HEK293T (cell line): ENCODE measurements at regions of chr2 and their contacts with region 1.

Region 1: GRCh38 chr2:215442404-215442794 is 6.5 kb upstream of the FN1 start:
- DNase-seq: no peak

Region 2: DNA sequence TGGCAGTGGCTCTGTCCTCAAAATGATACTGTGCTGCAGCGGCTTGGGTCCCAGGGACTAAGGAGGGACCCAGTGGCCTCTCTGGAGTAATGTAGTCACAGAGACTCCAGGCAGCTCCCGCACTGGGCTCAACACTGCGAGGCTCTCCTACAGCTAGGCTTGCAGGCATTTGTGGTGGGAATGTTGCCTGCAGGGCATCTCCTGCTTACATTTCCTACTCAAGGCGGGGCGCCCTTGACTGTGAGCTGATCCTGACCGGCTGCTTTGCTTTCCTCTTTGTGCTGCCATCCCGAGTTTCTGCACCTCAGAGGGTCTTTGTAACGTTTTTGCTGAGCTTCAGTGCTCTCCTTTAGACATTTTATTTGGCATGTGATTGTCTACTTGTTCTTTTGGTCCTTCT is 170.9 kb after region 1 on chr2:
- CTCF ChIA-PET with region 1: interaction called, 13 read pairs
- POLR2A ChIA-PET with region 1: no interaction called
- DNase-seq: no peak

Region 3: DNA sequence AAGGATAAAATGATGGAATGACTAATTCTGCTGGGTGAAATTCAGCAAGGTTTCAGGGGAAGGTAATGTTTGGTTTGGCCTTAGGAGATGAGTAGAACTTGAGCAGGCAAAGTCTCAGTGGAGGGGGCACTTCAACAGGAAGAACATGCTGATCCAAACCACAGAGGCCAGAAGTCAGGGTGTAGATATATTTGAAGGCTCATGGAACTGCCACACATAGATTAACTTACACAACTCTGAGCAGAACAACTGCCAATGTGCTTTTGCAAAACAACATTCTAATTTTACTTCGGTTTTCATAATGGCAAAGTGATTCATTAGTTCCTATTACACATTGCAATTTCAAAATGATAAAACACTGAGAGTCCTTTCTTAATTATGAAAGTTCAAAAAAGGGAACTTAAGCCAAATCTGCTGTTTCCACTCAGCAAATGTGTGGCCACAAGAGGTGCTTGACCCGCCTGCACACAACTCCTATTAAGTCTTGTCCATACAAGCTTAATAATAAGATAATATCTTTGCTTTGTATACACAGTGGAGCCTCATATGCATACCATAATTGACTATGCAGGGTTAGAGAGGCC is 286.2 kb after region 1 on chr2:
- CTCF ChIA-PET with region 1: no interaction called
- POLR2A ChIA-PET with region 1: no interaction called
- DNase-seq: no peak